K562 (cell line): ENCODE measurements at regions of chr6 and their contacts with region 1.

Region 1: GRCh38 chr6:169487579-169488436 is 214.0 kb downstream of the WDR27 start:
- DNase-seq: no peak
- ATAC-seq: no peak
- H3K4me3 ChIP-seq: no peak overlapping the region
- H3K27ac ChIP-seq: no peak overlapping the region
- H3K4me1 ChIP-seq: no peaks in the 10 kb centered on the region
- H3K27me3 ChIP-seq: peaks cover 8 to 20% of the 10 kb centered on the region in 2 experiments
- CTCF ChIP-seq: peak; percentile 28 to 48 (median 29); a peak in 4 of 6 replicates
- EP300 ChIP-seq: no peak
- POLR2A ChIP-seq: no peak
- RAD21 ChIP-seq: no peak

Region 2: DNA sequence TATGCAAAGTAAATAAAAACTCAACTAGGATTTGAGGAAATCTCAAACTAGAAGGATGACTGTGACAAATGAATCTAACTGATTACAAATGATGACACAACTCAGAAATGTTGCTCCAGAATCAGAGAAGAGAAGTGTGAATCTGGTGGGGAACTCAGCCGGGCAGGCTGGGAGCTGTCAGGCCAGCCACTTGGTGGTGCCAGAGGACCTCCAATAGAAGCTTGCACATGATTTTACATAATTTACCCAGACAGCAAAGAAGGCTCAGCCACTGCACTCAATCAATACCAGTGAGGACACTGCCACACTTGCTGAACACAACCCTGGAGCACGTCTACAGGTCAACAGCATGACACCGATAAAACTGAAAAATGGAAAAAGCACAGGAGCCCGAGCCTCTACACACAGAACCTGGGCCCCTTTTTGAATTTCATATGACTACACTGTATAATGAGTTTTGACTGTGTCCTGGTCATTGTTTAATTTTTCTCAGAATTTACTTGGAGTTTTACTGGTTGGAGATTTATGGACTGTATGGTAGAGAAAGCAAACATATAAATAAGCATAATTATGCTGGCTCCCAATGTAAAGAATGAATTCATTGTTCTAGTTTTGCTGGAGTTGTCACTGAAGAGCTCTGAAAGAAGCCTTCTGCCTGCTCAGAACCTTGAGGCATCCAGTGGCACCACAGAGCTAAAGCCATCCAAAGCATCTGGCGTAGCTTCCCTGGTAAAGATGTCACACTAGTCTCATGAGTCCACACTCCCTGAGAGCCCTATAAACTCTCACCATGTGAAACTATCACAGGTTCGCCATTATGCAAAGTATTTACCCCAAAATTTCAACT is 530.7 kb before region 1 on chr6:
- CTCF ChIA-PET with region 1: no interaction called
- POLR2A ChIA-PET with region 1: no interaction called
- in situ Hi-C with region 1: no loop called
- intact Hi-C with region 1: loop called (anchors 2 kb)
- DNase-seq: peak; percentile 34 to 70 (median 54)
- ATAC-seq: peak; percentile 95
- H3K4me3 ChIP-seq: no peak overlapping the region
- H3K27ac ChIP-seq: no peak overlapping the region
- H3K4me1 ChIP-seq: no peaks in the 10 kb centered on the region
- H3K27me3 ChIP-seq: peaks cover 0 to 12% of the 10 kb centered on the region in 2 experiments; a peak in 1 of 5 replicates
- CTCF ChIP-seq: peak; percentile 72 to 85 (median 84)
- EP300 ChIP-seq: no peak
- POLR2A ChIP-seq: no peak
- RAD21 ChIP-seq: peak; percentile 71 to 80

Region 3: DNA sequence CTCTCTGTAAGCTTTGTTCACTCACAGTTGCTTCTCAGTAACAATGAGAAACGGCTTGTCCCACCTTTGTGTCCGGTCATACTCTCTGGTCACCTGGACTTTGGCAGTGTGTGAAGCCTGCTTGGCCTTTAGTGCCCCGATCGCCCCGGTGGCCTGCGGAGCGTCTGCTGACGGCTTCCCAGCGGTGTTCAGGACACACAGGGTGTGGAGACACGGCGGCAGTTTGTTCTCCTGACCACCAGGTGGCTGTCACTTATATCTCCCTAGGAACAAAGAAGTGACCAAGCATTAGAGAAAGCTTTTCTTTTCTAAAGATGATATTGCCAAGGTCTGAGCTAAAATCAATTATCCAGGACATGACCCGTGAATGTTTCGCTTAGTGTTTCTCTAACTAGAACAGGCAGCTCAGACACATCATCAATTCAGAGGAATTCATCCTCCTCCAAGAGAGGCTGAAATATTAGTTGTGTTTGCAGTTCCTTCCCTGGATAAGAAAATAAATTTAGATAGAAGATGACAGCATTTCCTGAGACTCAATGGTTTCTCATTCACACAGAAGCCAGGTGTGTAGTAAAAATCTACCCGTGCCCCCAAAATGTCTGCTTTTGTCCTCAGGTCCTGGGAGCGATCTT is 66.8 kb before region 1 on chr6:
- CTCF ChIA-PET with region 1: interaction called, 3 read pairs
- POLR2A ChIA-PET with region 1: no interaction called
- in situ Hi-C with region 1: no loop called
- intact Hi-C with region 1: loop called (anchors 2 kb)
- DNase-seq: peak; percentile 64 to 77 (median 70)
- ATAC-seq: peak; percentile 98
- H3K4me3 ChIP-seq: no peak overlapping the region
- H3K27ac ChIP-seq: no peak overlapping the region
- H3K4me1 ChIP-seq: peaks cover 0 to 7% of the 10 kb centered on the region in 2 experiments; a peak in 3 of 5 replicates
- H3K27me3 ChIP-seq: peaks cover 26 to 52% of the 10 kb centered on the region in 2 experiments; a peak in 4 of 5 replicates
- CTCF ChIP-seq: peak; percentile 66 to 81 (median 70); a peak in 5 of 6 replicates
- EP300 ChIP-seq: no peak
- POLR2A ChIP-seq: no peak
- RAD21 ChIP-seq: peak; percentile 45 to 61